ENCODE measurements at regions of chr21 and their contacts with region 1.

Region 1: DNA sequence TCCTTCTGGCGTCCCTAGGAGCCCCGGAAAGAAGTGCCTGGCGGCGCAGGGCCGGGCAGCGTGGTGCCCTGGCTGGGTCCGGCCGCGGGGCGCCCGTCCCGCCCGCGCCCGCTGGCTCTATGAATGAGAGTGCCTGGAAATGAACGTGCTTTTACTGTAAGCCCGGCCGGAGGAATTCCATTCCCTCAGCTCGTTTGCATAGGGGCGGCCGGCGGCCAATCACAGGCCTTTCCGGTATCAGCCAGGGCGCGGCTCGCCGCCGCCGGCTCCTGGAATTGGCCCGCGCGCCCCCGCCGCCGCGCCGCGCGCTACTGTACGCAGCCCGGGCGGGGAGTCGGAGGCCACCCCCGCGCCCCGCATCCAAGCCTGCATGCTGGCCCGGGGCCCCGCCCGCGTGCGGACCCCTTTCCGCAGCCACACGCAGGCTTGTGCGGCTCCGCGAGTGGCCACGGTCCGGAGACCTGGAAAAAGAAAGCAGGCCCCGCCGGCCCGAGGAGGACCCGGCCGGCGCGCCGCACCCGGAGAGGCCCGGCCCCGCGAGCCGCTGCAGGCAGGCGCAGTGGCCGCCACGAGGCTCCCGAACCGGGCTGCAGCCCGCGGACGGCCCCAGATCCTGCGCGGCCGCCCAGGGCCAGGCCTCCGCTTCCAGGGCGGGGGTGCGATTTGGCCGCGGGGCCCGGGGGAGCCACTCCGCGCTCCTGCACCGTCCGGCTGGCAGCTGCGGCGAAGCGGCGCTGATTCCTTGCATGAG is 160.4 kb downstream of the RUNX1 start:
- DNase-seq: peak; percentile 95
- ATAC-seq: peak; percentile 82

Region 2: GRCh38 chr21:34722684-34723300 is 166.0 kb before region 1 on chr21:
- intact Hi-C with region 1: no loop called
- DNase-seq: no peak
- ATAC-seq: no peak

Region 3: GRCh38 chr21:34745557-34746255 is 143.0 kb before region 1 on chr21:
- intact Hi-C with region 1: loop called (anchors 5 to 10 kb)
- DNase-seq: peak; percentile 70
- ATAC-seq: peak; percentile 86 to 95

Region 4: GRCh38 chr21:35400233-35400957 is 511.7 kb after region 1 on chr21:
- intact Hi-C with region 1: loop called in 1 of 2 experiments (anchors 10 kb)
- DNase-seq: no peak
- ATAC-seq: peak; percentile 73

Region 5: DNA sequence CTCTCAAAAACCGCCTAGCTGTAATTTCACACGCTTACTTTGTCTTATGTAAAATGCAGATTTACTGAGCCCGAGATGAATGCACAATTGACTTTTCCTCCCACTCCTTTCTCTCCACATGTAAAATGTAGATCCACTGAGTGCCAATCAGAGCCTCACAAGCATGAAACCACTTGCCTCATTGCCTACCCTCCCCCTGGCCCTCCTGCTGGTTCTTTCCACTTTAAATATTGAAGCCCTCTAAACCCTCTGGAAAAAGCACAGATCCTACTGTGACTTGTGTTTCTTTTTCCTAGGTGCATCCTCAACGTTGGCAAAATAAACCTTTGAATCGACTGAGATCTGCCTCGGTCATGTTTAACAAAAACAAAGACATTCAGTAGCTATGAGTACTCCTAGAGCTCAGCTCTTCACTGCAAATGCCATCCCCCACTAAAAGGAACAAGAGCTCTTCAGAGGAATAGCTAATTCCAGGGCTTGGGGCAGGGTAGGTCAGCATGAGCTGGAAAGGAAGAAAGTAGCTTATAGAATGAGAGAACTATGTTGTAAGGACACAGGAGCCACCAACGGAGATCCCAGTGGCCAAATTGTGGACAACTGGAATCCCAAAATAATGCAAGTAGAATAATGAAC is 525.9 kb after region 1 on chr21:
- intact Hi-C with region 1: loop called (anchors 10 kb)
- DNase-seq: no peak
- ATAC-seq: no peak

Region 6: GRCh38 chr21:35508139-35508888 is 619.6 kb after region 1 on chr21:
- intact Hi-C with region 1: loop called in 1 of 2 experiments (anchors 10 kb)
- DNase-seq: peak; percentile 73
- ATAC-seq: peak; percentile 88

Region 7: GRCh38 chr21:35840197-35840799 is 951.6 kb after region 1 on chr21:
- intact Hi-C with region 1: loop called in 1 of 2 experiments (anchors 10 kb)
- DNase-seq: peak; percentile 71
- ATAC-seq: peak; percentile 66 to 75

Region 8: GRCh38 chr21:35925497-35925896 is 1036.8 kb after region 1 on chr21:
- intact Hi-C with region 1: loop called in 1 of 2 experiments (anchors 10 kb)
- DNase-seq: no peak
- ATAC-seq: peak; percentile 26 to 53

Measured in left cardiac atrium (tissue), 4 donors.